ENCODE measurements at regions of chr19 and their contacts with region 1.

Region 1: DNA sequence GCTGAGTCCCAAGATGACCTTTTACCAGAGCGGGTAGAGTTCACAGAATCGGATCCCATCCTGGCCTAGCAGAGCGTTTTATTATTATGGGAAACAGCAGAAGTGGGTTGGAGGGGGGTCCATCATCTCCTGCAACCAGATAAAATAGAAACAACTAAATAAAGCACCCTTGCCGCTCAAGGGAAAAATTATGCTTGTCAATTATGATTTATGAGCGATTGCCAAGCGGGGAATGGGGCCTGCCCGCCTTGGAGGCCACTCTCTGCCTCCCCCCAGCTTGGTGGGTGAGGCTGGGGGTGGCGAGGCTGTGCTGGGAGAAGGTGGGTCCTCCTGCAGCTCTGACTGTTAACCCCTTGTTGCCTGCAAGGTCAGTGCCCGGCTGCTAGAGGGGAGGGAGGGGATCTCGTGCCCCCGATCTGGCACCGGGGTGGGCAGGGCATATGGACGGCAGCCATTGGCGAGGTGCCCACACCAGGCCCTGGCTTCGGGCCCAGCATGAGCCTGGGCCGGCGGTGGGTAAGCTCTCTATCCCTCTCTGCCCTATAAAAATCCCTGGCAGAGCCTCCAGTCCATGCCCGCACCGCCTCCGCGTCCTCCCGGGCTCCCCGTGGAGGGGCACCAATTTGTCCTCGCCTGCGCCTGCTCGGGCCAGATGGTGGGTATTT is 129.1 kb downstream of the URI1 start:
- DNase-seq: peak in 1 of 5 donors; percentile 21
- H3K4me3 ChIP-seq: no peak overlapping the region
- H3K27ac ChIP-seq: no peak overlapping the region
- H3K4me1 ChIP-seq: no peaks in the 10 kb centered on the region
- H3K27me3 ChIP-seq: no peaks in the 10 kb centered on the region
- CTCF ChIP-seq: no peak
- EP300 ChIP-seq: no peak
- POLR2A ChIP-seq: no peak

Region 2: DNA sequence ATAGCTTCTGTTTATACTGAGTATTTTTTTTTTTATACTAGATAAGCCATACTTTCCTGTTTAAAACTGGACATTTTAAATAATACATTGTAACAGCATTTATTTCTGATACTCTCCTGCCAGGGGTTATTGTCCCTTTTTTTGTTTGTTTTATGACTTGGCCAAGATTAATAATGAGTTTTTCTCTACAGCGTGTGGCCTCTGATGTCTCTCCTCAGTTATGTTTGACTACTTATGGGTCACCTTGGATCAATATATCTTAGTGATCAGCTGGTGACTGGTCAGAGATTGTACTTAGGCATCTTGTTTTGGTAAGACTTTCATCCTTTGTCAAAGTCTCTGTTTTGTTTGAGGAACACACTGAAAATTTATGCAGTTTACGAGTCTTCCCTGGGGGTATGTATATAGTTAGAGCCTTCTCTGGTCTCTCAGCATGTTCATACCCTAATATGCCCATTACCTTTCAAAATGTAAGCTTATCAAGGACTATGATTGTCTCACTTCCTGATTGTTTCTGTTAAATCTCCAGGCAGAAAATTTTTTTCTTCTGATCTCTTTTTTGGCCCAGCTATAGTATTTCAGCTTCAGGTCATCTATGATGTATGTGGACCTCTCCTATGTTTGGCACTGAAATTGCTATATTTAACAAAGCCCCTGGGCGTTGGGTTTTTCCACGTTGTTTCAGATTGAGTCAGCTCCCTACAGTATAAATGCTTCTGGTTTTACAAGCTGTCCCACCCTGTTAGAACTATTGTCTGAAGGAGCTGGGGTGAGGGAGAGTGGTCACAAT is 41.2 kb before region 1 on chr19:
- intact Hi-C with region 1: no loop called
- DNase-seq: no peak
- H3K4me3 ChIP-seq: no peak overlapping the region
- H3K27ac ChIP-seq: no peak overlapping the region
- H3K4me1 ChIP-seq: no peaks in the 10 kb centered on the region
- H3K27me3 ChIP-seq: no peaks in the 10 kb centered on the region
- CTCF ChIP-seq: no peak
- EP300 ChIP-seq: no peak
- POLR2A ChIP-seq: no peak

Region 3: DNA sequence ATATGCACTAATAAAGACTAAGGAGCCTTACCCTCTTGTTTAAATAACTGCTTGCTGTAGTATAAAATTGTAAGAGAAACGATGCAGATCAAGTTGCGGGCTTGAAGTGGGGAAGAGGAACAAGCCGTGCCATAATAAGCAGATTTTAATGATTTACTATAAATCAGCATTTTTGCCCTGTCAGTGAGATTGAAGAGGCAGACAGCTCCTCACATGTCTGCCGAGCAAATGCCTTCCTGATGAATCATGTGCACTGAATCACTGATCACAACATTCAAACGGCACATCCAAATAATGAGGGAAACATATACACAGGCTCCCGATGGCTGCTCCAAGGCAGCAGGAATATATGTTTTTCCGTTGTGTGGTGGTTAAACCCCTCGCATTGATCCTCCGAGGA is 995.3 kb after region 1 on chr19:
- intact Hi-C with region 1: loop called in 1 of 4 experiments (anchors 5 kb)
- DNase-seq: no peak
- H3K4me3 ChIP-seq: no peak overlapping the region
- H3K27ac ChIP-seq: no peak overlapping the region
- H3K4me1 ChIP-seq: peaks cover 3% of the 10 kb centered on the region
- H3K27me3 ChIP-seq: no peaks in the 10 kb centered on the region
- CTCF ChIP-seq: no peak
- EP300 ChIP-seq: no peak
- POLR2A ChIP-seq: no peak

Measured in ovary (tissue), 10 donors.